ENCODE measurements at regions of chr11 and their contacts with region 1.

Region 1: GRCh38 chr11:60265373-60266214 is 14.9 kb upstream of the MS4A4A start:
- H3K4me3 ChIP-seq: no peak overlapping the region
- H3K27ac ChIP-seq: no peak overlapping the region
- H3K4me1 ChIP-seq: no peaks in the 10 kb centered on the region
- CTCF ChIP-seq: no peak

Region 2: GRCh38 chr11:60204922-60205321 is 60.7 kb before region 1 on chr11:
- CTCF ChIA-PET with region 1: no interaction called
- POLR2A ChIA-PET with region 1: no interaction called
- H3K4me3 ChIP-seq: no peak overlapping the region
- H3K27ac ChIP-seq: no peak overlapping the region
- H3K4me1 ChIP-seq: no peaks in the 10 kb centered on the region
- CTCF ChIP-seq: no peak

Region 3: GRCh38 chr11:60625262-60625661 is 359.7 kb after region 1 on chr11:
- CTCF ChIA-PET with region 1: interaction called, 30 read pairs
- POLR2A ChIA-PET with region 1: no interaction called
- H3K4me3 ChIP-seq: no peak overlapping the region
- H3K27ac ChIP-seq: no peak overlapping the region
- H3K4me1 ChIP-seq: no peaks in the 10 kb centered on the region
- CTCF ChIP-seq: no peak